ENCODE measurements at regions of chr5 and their contacts with region 1.

Region 1: GRCh38 chr5:150175076-150175935 is 8.7 kb downstream of the CDX1 start:
- DNase-seq: peak; percentile 7
- H3K4me3 ChIP-seq: no peak overlapping the region
- H3K27ac ChIP-seq: no peak overlapping the region
- H3K4me1 ChIP-seq: no peaks in the 10 kb centered on the region
- H3K27me3 ChIP-seq: no peaks in the 10 kb centered on the region
- CTCF ChIP-seq: peak; percentile 31 to 48

Region 2: GRCh38 chr5:149860801-149861322 is 314.4 kb before region 1 on chr5:
- CTCF ChIA-PET with region 1: no interaction called
- dilution Hi-C with region 1: no loop called
- in situ Hi-C with region 1: no loop called
- intact Hi-C with region 1: no loop called
- DNase-seq: peak; percentile 76
- H3K4me3 ChIP-seq: no peak overlapping the region
- H3K27ac ChIP-seq: no peak overlapping the region
- H3K4me1 ChIP-seq: peaks cover 24% of the 10 kb centered on the region
- H3K27me3 ChIP-seq: no peaks in the 10 kb centered on the region
- CTCF ChIP-seq: no peak

Region 3: DNA sequence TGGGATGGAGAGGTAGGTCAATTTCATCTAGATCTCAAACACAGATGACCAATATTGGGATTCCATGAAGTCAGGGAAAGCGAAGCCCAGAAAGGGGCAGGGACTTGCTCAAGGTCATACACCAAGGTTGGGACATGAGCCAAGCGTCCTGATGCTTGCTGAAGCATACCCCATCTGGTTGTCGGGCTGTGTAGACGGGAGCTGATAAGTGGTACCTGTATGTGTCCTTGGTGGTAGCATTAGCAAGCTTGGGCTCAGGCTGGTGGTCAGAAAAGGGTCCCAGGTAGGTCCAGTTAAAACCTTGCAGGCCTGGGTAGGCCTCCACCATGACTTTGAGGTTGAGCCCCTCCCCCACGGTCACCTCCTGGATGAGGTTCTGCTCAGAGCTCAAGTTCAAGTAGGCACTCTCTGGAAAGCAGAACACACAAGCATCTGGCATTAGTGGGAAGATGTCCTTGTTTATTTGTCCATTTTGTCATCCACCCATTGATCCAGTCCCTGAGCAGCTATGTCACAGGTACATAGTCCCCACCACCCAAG is 102.2 kb before region 1 on chr5:
- CTCF ChIA-PET with region 1: no interaction called
- dilution Hi-C with region 1: loop called (anchors 5 kb)
- in situ Hi-C with region 1: no loop called
- intact Hi-C with region 1: no loop called
- DNase-seq: no peak
- H3K4me3 ChIP-seq: no peak overlapping the region
- H3K27ac ChIP-seq: no peak overlapping the region
- H3K4me1 ChIP-seq: no peaks in the 10 kb centered on the region
- H3K27me3 ChIP-seq: no peaks in the 10 kb centered on the region
- CTCF ChIP-seq: no peak

Region 4: GRCh38 chr5:150129813-150130492 is 45.4 kb before region 1 on chr5:
- CTCF ChIA-PET with region 1: no interaction called
- dilution Hi-C with region 1: no loop called
- in situ Hi-C with region 1: no loop called
- intact Hi-C with region 1: loop called (anchors 1 kb)
- DNase-seq: peak; percentile 59
- H3K4me3 ChIP-seq: peak overlapping the region in 1 of 3 experiments; percentile 35
- H3K27ac ChIP-seq: no peak overlapping the region
- H3K4me1 ChIP-seq: peaks cover 17% of the 10 kb centered on the region
- H3K27me3 ChIP-seq: no peaks in the 10 kb centered on the region
- CTCF ChIP-seq: peak; percentile 95 to 98

Region 5: GRCh38 chr5:150234576-150235499 is 59.5 kb after region 1 on chr5:
- CTCF ChIA-PET with region 1: no interaction called
- dilution Hi-C with region 1: loop called (anchors 5 kb)
- in situ Hi-C with region 1: no loop called
- intact Hi-C with region 1: no loop called
- DNase-seq: no peak
- H3K4me3 ChIP-seq: no peak overlapping the region
- H3K27ac ChIP-seq: no peak overlapping the region
- H3K4me1 ChIP-seq: no peaks in the 10 kb centered on the region
- H3K27me3 ChIP-seq: no peaks in the 10 kb centered on the region
- CTCF ChIP-seq: no peak

Region 6: GRCh38 chr5:150253205-150253811 is 78.0 kb after region 1 on chr5:
- CTCF ChIA-PET with region 1: no interaction called
- dilution Hi-C with region 1: loop called (anchors 5 kb)
- in situ Hi-C with region 1: no loop called
- intact Hi-C with region 1: no loop called
- DNase-seq: no peak
- H3K4me3 ChIP-seq: no peak overlapping the region
- H3K27ac ChIP-seq: no peak overlapping the region
- H3K4me1 ChIP-seq: no peaks in the 10 kb centered on the region
- H3K27me3 ChIP-seq: no peaks in the 10 kb centered on the region
- CTCF ChIP-seq: no peak

Region 7: DNA sequence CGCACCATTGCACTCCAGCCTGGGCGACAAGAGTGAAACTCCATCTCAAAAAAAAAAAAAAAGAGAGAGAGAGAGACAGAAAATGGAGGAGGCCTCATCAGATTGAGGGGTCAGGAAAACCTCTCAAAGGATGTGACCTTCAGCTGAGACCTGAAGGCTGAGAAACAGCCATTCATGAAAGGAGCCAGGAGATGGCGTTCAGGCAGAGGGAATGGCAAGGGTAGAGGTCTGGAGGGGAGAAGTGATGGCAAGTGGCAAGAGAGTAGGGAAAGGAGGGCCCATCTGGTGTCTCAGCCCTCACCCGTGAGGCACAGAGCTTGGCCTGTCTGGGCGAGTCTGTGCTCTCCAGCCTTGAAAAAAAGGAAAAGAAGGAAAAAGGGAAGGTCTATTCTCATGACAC is 97.2 kb after region 1 on chr5:
- CTCF ChIA-PET with region 1: no interaction called
- dilution Hi-C with region 1: loop called (anchors 5 kb)
- in situ Hi-C with region 1: no loop called
- intact Hi-C with region 1: no loop called
- DNase-seq: peak; percentile 46
- H3K4me3 ChIP-seq: no peak overlapping the region
- H3K27ac ChIP-seq: no peak overlapping the region
- H3K4me1 ChIP-seq: peaks cover 5% of the 10 kb centered on the region
- H3K27me3 ChIP-seq: no peaks in the 10 kb centered on the region
- CTCF ChIP-seq: peak; percentile 53 to 78

Region 8: GRCh38 chr5:150389531-150390266 is 214.4 kb after region 1 on chr5:
- CTCF ChIA-PET with region 1: no interaction called
- dilution Hi-C with region 1: loop called (anchors 5 kb)
- in situ Hi-C with region 1: no loop called
- intact Hi-C with region 1: no loop called
- DNase-seq: no peak
- H3K4me3 ChIP-seq: no peak overlapping the region
- H3K27ac ChIP-seq: no peak overlapping the region
- H3K4me1 ChIP-seq: peaks cover 9% of the 10 kb centered on the region
- H3K27me3 ChIP-seq: no peaks in the 10 kb centered on the region
- CTCF ChIP-seq: no peak

Region 9: GRCh38 chr5:151164686-151165392 is 989.5 kb after region 1 on chr5:
- CTCF ChIA-PET with region 1: no interaction called
- dilution Hi-C with region 1: no loop called
- in situ Hi-C with region 1: no loop called
- intact Hi-C with region 1: no loop called
- DNase-seq: peak; percentile 60
- H3K4me3 ChIP-seq: no peak overlapping the region
- H3K27ac ChIP-seq: no peak overlapping the region
- H3K4me1 ChIP-seq: no peaks in the 10 kb centered on the region
- H3K27me3 ChIP-seq: peaks cover 3% of the 10 kb centered on the region
- CTCF ChIP-seq: peak; percentile 96

Measured in mammary epithelial cell (primary cell).